ENCODE measurements at regions of chr10 and their contacts with region 1.

Region 1: DNA sequence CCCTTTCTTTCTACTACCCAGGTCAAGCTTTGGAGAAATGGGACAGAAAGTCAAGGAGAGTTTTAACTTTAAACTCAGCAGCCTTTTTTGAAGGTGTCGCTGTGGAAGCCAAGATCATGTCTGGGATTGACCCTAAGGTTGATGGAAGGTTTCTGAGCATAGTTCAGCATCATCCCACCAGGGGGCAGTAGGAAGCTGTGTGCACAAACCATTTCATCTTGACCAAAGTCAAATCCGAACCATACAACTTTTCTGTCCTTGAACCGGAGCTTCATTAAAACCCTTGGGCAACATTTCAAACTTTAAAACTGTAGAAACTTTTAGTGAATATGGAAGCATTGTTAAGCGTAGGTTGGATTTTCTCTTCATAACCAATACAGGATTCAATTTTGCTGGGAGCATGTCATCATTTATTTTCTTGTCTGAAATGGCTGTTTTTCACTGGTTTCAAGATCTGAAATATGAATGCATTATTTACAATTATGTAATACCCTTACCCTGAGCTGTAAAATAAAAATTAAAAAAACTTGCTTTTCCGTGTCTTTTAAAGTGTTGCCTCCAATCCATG is 214.4 kb upstream of the KIAA1217 start:
- DNase-seq: no peak
- H3K4me3 ChIP-seq: peak overlapping the region in 1 of 4 donors; percentile 5
- H3K27ac ChIP-seq: no peak overlapping the region
- H3K4me1 ChIP-seq: peaks cover 0 to 5% (median 0%) of the 10 kb centered on the region in 4 donors
- H3K27me3 ChIP-seq: no peaks in the 10 kb centered on the region
- CTCF ChIP-seq: peak; percentile 59 to 77 (median 72)
- EP300 ChIP-seq: no peak
- POLR2A ChIP-seq: no peak

Region 2: DNA sequence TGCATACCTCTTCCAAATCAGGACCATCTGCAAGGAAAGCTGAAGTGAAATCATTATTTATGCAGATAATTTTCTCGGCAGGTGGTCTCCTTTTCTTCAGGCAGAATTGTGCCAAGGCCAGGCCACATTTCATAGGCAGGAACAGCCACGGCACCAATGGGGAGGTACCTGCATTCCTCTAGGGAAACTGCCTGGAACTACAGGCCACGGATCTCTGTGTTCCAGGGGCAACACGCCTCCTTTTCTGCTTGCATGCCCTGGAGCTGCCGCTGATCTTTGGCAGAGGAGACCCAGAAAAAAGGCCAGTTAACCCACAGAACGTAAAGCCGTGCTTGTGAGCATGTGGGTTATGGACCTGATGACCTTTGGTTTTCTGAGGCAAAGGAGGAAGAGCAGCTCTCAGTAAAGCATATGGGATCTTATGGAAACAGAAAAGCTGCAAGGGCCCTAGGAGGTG is 103.2 kb after region 1 on chr10:
- intact Hi-C with region 1: no loop called
- DNase-seq: no peak
- H3K4me3 ChIP-seq: no peak overlapping the region
- H3K27ac ChIP-seq: no peak overlapping the region
- H3K4me1 ChIP-seq: no peaks in the 10 kb centered on the region
- H3K27me3 ChIP-seq: no peaks in the 10 kb centered on the region
- CTCF ChIP-seq: no peak
- EP300 ChIP-seq: no peak
- POLR2A ChIP-seq: no peak

Region 3: DNA sequence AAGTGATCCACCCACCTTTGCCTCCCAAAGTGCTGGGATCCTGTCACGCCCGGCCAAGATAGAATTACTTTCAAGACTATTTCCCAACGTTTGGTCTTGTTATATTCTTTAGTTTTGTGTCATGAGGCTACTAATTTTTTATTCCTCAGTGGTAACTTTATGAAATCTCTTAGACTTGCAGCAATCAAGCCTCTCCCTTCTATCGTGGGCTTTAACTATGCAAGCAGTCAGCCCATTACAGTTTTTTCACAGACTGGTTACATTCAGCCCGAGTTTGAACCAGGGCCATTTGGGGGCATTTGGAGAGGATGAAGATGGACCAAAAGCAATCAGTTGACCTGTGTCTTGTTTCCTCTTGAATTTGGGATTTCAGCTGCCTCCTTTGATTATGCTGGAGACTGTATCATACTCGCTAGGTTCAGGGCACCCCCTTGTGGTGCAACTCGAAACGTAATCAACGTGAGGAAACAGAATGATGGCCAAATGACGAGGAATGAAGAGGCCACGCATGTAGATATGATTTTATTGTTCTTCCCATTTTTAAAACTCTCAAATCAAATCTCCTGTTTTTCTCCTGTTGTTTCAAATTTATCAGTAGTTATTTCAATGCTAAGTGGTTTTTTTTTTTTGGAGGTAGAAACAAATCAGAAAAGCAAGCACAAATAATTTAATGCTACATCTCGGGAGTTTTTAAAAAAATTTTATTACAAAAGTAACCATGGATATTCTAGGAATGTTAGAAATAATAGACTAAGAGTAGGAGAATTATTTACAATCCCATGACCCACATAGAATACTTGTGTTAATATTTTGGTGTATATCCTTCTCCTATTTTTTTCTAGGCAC is 365.9 kb after region 1 on chr10:
- intact Hi-C with region 1: loop called (anchors 5 kb)
- DNase-seq: no peak
- H3K4me3 ChIP-seq: no peak overlapping the region
- H3K27ac ChIP-seq: no peak overlapping the region
- H3K4me1 ChIP-seq: peaks cover 0 to 10% (median 8%) of the 10 kb centered on the region in 4 donors
- H3K27me3 ChIP-seq: no peaks in the 10 kb centered on the region
- CTCF ChIP-seq: peak; percentile 43 to 65 (median 56)
- EP300 ChIP-seq: no peak
- POLR2A ChIP-seq: no peak

Measured in esophagus muscularis mucosa (tissue), 4 donors.